ENCODE measurements at regions of chr4 and their contacts with region 1.

Region 1: GRCh38 chr4:76067652-76068286 is 6.7 kb upstream of the ART3 start:
- DNase-seq: peak; percentile 70 to 83
- H3K4me3 ChIP-seq: no peak overlapping the region
- H3K4me1 ChIP-seq: peaks cover 6% of the 10 kb centered on the region
- H3K27me3 ChIP-seq: no peaks in the 10 kb centered on the region

Region 2: DNA sequence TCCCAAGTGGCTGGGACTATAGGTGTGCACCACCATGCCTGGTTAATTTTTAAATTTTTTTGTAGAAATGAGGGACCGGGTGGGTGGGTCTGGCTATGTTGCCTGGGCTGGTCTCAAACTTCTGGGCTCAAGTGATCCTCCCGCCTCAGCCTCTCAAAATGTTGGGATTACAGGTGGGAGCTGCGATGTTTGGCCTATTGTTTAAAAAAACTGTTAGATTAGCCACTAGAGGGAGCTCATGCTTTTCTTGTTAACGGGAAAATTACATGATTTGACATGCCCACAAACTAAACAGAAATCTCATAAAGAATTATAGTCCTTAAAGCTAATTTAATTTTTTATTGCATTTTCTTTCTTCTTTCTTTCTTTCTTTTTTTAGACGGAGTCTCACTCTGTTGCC is 72.0 kb before region 1 on chr4:
- in situ Hi-C with region 1: loop called (anchors 5 kb)
- DNase-seq: peak; percentile 27 to 69
- H3K4me3 ChIP-seq: no peak overlapping the region
- H3K4me1 ChIP-seq: no peaks in the 10 kb centered on the region
- H3K27me3 ChIP-seq: no peaks in the 10 kb centered on the region